ENCODE measurements at regions of chr1 and their contacts with region 1.

Region 1: GRCh38 chr1:27981145-27981544 is 21.4 kb downstream of the XKR8 start:
- DNase-seq: no peak
- ATAC-seq: no peak
- H3K4me3 ChIP-seq: no peak overlapping the region
- H3K4me1 ChIP-seq: no peaks in the 10 kb centered on the region
- CTCF ChIP-seq: no peak

Region 2: DNA sequence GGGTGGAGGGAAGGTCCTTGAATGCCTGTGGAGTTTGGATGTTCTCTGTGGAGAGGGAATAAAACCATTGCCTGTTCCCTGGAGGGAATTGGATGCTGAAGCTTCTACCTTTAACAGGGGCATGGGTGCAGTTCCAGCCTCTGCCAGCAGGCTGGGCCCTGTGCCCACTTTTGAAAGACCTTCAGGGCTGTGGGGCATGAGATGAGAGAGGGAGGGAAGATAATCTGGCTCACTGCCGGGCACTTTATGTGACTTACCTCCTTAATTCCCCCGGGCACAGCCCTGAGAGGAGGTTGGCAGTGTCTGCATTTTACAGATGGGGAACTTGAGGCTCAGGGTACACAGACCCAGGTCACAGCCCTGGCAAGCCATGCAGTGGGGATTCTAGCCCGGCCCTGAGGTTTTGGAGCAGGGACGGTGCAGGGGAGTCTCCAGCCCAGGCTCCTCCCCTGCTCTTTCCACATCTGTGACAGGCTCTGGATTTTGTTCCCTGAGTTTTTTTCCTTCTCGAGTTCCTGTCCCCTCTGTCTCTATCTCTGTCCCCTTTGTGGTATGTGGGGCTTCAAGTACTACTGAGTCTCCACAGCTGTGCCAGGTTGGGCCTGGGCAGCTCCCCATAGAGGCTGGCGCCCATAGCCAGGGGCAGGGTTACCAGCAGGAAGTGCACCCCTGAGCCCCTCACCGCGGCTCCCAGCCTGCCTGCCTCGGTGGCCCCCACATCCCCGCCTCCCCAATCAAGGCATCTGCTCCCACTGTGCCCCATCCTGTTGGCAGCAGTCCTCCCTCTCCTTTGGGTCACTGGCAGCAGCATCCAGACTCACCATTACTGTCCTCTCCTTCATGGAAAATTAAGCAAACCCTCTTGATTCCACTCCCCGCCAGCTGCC is 122.8 kb before region 1 on chr1:
- intact Hi-C with region 1: loop called in 1 of 2 experiments (anchors 5 kb)
- DNase-seq: peak; percentile 85 to 95 (median 92)
- ATAC-seq: peak; percentile 96
- H3K4me3 ChIP-seq: no peak overlapping the region
- H3K4me1 ChIP-seq: no peaks in the 10 kb centered on the region
- CTCF ChIP-seq: peak; percentile 99

Region 3: GRCh38 chr1:28045777-28046176 is 64.6 kb after region 1 on chr1:
- intact Hi-C with region 1: no loop called
- DNase-seq: no peak
- ATAC-seq: no peak
- H3K4me3 ChIP-seq: no peak overlapping the region
- H3K4me1 ChIP-seq: no peaks in the 10 kb centered on the region
- CTCF ChIP-seq: no peak

Measured in mucosa of descending colon (tissue), 3 donors.